Activated naive CD8-positive, alpha-beta T cell treated with anti-CD3 and anti-CD28 coated beads, Interleukin-2, amount 10 ng/mL, durations not matched to agents 7 days and 5 days (primary cell): ENCODE measurements at regions of chr7 and their contacts with region 1.

Region 1: GRCh38 chr7:100101016-100101862 is at the starts of genes AP4M1 and MCM7:
- DNase-seq: peak; percentile 96
- ATAC-seq: peak; percentile 87
- H3K4me3 Mint-ChIP-seq: peak within 1 kb of the TSS; percentile 93
- H3K27ac Mint-ChIP-seq: peak within 1 kb of the TSS; percentile 89
- H3K4me1 Mint-ChIP-seq: peaks cover 31% of the 10 kb centered on the region
- H3K27me3 Mint-ChIP-seq: no peaks in the 10 kb centered on the region
- total RNA-seq, gene AP4M1: 15.0 to 16.5 TPM
- total RNA-seq, gene MCM7: 278 to 307 TPM

Region 2: GRCh38 chr7:99918959-99919813 is 182.1 kb before region 1 on chr7 and contains the start of gene TRIM4:
- POLR2A ChIA-PET with region 1: interaction called, 16 read pairs
- DNase-seq: peak; percentile 90
- ATAC-seq: peak; percentile 98
- H3K4me3 Mint-ChIP-seq: peak within 1 kb of the TSS; percentile 97
- H3K27ac Mint-ChIP-seq: peak within 1 kb of the TSS; percentile 96
- H3K4me1 Mint-ChIP-seq: peaks cover 44% of the 10 kb centered on the region
- H3K27me3 Mint-ChIP-seq: no peaks in the 10 kb centered on the region
- total RNA-seq, gene TRIM4: 41.2 to 42.2 TPM

Region 3: GRCh38 chr7:100081535-100082102 is 19.6 kb before region 1 on chr7 and contains the start of gene ZNF3:
- POLR2A ChIA-PET with region 1: interaction called, 22 read pairs
- DNase-seq: peak; percentile 96
- ATAC-seq: peak; percentile 90
- H3K4me3 Mint-ChIP-seq: peak within 1 kb of the TSS; percentile 86
- H3K27ac Mint-ChIP-seq: peak within 1 kb of the TSS; percentile 86
- H3K4me1 Mint-ChIP-seq: peaks cover 25% of the 10 kb centered on the region
- H3K27me3 Mint-ChIP-seq: peaks cover 10% of the 10 kb centered on the region
- total RNA-seq, gene ZNF3: 28.0 to 32.6 TPM

Region 4: DNA sequence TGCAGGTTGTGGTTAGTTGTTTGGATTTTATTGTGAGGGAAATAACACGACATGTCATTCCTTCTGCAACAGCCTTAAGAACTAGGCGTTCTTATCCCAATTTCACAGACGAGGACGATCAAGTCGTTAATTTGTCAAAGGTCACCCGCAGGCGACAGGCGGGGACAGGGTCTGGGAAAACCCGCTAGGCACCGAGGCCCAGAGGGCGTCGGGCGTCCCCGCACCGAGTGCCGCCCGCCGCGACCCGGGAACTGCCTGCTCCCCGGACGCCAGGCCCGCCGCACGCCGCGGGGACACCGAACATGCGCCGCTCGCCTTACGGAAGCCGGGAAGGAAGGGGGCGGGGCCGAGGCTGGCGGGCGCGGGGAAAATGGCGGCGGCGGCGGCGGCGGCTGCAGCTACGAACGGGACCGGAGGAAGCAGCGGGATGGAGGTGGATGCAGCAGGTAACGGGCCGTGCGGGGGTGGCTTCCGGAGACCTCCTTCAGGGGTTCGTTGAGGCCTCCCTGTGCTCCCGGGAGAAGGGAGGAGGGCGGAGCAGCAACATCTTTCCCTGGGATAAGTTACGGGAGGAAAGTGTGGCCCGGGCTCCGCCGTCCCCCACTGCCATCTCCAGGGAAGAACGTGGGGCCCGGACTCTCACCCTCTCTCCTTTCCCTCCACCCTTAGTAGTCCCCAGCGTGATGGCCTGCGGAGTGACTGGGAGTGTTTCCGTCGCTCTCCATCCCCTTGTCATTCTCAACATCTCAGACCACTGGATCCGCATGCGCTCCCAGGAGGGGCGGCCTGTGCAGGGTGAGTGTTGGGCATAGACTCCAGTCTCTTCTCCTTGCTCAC is 12.4 kb before region 1 on chr7 and contains the start of gene COPS6:
- POLR2A ChIA-PET with region 1: interaction called, 57 read pairs
- DNase-seq: peak; percentile 95
- ATAC-seq: peak; percentile 69
- H3K4me3 Mint-ChIP-seq: peak within 1 kb of the TSS; percentile 89
- H3K27ac Mint-ChIP-seq: peak within 1 kb of the TSS; percentile 92
- H3K4me1 Mint-ChIP-seq: peaks cover 18% of the 10 kb centered on the region
- H3K27me3 Mint-ChIP-seq: peaks cover 2% of the 10 kb centered on the region
- total RNA-seq, gene COPS6: 72.4 to 76.7 TPM

Region 5: DNA sequence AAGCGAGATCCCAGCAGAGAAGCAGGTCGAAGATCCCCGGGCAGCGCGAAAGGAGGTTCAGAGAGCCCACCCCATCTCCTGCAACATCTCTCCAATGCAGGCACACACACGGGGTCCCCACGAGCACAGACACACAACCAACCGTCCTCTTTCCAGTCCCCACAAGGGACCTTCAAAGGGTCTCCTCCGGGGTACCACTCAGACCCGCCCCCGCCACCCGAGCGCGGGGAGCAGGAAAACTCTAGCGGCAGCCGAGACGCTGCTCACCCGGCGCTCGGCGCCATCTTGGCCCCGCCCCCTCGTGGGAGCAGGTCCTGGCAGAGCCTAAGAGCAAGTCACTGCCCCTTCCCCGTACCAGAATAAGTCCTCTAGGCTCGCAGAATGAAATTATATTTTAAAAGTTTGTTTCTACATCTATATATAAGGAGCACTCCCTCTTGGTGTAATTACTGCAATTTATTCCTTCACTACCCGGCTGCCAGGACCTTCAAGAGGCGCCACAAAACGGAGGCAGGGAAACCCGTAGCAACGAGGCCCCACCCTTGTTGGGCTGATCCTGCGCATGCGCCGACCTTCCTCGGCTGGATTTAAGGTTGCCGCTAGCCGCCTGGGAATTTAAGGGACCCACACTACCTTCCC is 17.9 kb after region 1 on chr7 and contains the starts of genes CNPY4 and TAF6:
- POLR2A ChIA-PET with region 1: interaction called, 89 read pairs
- DNase-seq: peak; percentile 93
- ATAC-seq: peak; percentile 65
- H3K4me3 Mint-ChIP-seq: peak within 1 kb of the TSS; percentile 87
- H3K27ac Mint-ChIP-seq: peak within 1 kb of the TSS; percentile 88
- H3K4me1 Mint-ChIP-seq: peaks cover 15% of the 10 kb centered on the region
- H3K27me3 Mint-ChIP-seq: no peaks in the 10 kb centered on the region
- total RNA-seq, gene CNPY4: 52.4 to 58.3 TPM
- total RNA-seq, gene TAF6: 63.7 to 65.9 TPM

Region 6: DNA sequence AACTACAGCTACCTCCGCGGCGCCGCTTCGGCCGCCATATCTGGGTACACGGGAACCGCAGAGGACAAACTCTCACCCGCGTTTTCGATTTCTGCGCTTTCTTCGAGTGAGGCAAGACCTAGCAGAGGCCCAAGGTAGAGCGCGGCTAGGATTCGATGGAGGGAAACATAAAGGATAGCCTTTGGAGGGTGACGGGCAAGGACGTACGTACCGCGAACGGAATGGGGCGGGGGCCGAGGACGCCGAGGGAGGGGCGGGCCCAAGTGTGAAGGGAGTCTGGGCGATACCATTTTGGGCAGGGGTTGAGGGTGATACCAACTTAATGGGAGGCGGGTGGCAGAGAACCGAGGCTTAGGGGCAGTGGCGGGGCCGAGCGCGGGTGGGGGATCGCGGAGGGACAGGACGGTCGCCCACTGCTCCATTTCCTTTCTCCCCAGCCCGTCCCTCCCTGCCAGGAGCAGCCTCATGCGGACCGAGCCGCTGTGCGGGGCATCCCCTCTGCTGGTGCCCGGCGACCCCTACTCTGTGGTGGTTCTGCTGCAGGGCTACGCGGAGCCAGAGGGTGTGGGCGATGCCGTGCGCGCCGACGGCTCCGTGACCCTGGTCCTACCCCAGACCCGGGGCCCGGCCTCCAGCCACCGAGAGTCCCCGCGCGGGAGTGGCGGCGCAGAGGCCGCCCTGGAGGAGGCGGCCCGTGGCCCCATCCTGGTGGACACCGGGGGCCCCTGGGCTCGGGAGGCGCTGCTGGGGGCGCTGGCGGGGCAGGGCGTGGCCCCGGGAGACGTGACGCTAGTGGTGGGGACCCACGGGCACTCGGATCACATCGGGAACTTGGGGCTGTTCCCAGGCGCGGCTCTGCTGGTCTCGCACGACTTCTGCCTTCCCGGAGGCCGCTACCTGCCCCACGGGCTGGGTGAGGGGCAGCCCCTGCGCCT is 26.0 kb after region 1 on chr7 and contains the start of gene MBLAC1:
- POLR2A ChIA-PET with region 1: interaction called, 89 read pairs
- DNase-seq: peak; percentile 87
- ATAC-seq: peak; percentile 68
- H3K4me3 Mint-ChIP-seq: peak within 1 kb of the TSS; percentile 100
- H3K27ac Mint-ChIP-seq: peak within 1 kb of the TSS; percentile 100
- H3K4me1 Mint-ChIP-seq: peaks cover 22% of the 10 kb centered on the region
- H3K27me3 Mint-ChIP-seq: no peaks in the 10 kb centered on the region
- total RNA-seq, gene MBLAC1: 4.8 to 6.5 TPM

Region 7: GRCh38 chr7:100428199-100428966 is 327.1 kb after region 1 on chr7 and contains the start of gene ZCWPW1:
- POLR2A ChIA-PET with region 1: interaction called, 18 read pairs
- DNase-seq: peak; percentile 98
- ATAC-seq: peak; percentile 57
- H3K4me3 Mint-ChIP-seq: peak within 1 kb of the TSS; percentile 97
- H3K27ac Mint-ChIP-seq: peak within 1 kb of the TSS; percentile 99
- H3K4me1 Mint-ChIP-seq: peaks cover 28% of the 10 kb centered on the region
- H3K27me3 Mint-ChIP-seq: peaks cover 7% of the 10 kb centered on the region
- total RNA-seq, gene ZCWPW1: 6.2 to 6.5 TPM

Region 8: DNA sequence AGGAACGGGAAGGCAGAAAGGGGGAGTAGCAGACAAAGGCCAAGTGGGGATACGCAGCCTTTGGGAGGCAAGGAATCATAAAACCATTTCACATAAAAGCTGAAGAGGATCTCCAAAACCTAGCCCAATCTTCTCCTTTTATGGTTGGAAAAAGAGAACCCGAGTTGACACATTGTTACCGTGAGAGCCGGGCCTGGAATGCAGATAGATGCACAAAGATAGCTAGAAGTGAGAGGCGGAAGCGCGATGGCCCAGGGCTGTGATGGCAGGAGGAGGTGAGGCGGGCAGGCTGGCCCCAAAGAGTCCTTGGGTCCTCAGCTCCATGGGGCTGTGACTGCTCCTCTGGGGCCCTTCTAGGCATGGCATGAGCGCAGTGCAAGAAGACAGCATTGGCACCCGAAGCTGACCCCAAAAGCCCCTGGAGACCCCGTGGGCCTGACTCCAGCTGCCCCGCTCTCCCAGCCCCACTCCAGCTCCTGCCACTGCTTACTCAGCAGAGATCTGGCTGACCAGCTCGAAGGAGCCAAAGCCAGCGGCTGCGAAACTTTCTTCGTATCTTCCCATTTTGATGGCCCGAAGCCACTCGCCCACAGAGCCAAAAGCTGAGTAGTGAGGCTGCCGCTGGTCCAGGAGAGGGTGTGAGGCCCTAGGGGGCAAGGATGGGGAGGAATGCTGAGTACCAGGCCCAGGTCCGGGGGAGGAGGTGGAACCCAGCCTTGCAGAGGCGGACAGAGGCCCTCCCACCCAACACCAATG is 703.6 kb after region 1 on chr7:
- POLR2A ChIA-PET with region 1: no interaction called
- DNase-seq: no peak
- ATAC-seq: no peak
- H3K4me3 Mint-ChIP-seq: no peak overlapping the region
- H3K27ac Mint-ChIP-seq: no peak overlapping the region
- H3K4me1 Mint-ChIP-seq: peaks cover 3% of the 10 kb centered on the region
- H3K27me3 Mint-ChIP-seq: peaks cover 3% of the 10 kb centered on the region